CD8-positive, alpha-beta T cell (primary cell): ENCODE measurements at regions of chr1 and their contacts with region 1.

Region 1: DNA sequence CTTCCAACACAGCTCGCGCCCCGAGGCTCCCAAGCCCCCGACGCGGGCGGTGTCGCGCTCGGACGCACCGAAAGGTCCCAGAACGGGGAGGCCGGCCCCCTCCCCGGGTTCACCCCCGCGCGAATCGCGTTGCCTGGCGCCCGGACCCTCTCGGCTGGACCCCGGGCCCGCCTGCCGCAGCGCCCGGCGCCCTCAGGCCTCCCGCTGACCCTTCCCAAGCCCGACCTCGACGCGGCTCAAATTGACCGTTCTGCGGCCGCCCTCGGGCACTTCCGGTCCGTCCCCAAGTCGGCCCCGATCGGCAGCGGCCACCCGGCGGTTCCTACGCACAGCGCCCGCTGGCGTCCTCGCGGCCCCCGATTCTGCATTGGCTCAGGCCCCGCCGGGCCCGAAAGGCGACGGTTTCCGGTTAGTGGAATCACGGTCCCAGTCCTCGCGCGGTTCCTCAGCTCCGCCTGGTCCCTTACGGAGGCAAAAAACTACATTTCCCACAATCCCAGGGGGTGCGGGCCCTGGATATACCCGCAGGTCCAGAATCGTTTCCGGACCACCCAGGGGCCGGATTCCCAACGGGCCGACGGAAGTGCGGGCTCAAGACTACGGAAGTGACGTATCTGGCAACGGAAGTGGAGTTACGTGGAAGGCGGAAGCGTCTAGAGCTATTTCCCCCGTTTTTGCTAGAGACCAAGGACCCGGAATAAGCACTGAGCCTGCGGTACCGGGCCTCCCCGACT is at the start of gene AURKAIP1:
- DNase-seq: peak; percentile 89 to 100 (median 95)
- ATAC-seq: peak; percentile 58
- H3K4me3 ChIP-seq: peak within 1 kb of the TSS; percentile 79 to 91
- H3K4me3 Mint-ChIP-seq: peak within 1 kb of the TSS; percentile 86
- H3K27ac ChIP-seq: peak within 1 kb of the TSS; percentile 83 to 94
- H3K27ac Mint-ChIP-seq: peak within 1 kb of the TSS; percentile 94
- H3K4me1 ChIP-seq: peaks cover 33% of the 10 kb centered on the region
- H3K4me1 Mint-ChIP-seq: peaks cover 33% of the 10 kb centered on the region
- H3K27me3 ChIP-seq: no peaks in the 10 kb centered on the region
- H3K27me3 Mint-ChIP-seq: no peaks in the 10 kb centered on the region
- CTCF ChIP-seq: no peak
- total RNA-seq, gene AURKAIP1: 58.4 to 62.6 TPM

Region 2: GRCh38 chr1:1122078-1122811 is 252.9 kb before region 1 on chr1:
- CTCF ChIA-PET with region 1: interaction called, 30 read pairs
- POLR2A ChIA-PET with region 1: no interaction called
- intact Hi-C with region 1: loop called in 1 of 2 experiments (anchors 1 kb)
- DNase-seq: peak; percentile 68 to 92 (median 82)
- ATAC-seq: peak; percentile 98
- H3K4me3 ChIP-seq: peak overlapping the region; percentile 43 to 46
- H3K4me3 Mint-ChIP-seq: peak overlapping the region; percentile 37
- H3K27ac ChIP-seq: no peak overlapping the region
- H3K27ac Mint-ChIP-seq: no peak overlapping the region
- H3K4me1 ChIP-seq: peaks cover 12% of the 10 kb centered on the region
- H3K4me1 Mint-ChIP-seq: peaks cover 4% of the 10 kb centered on the region
- H3K27me3 ChIP-seq: peaks cover 0 to 3% of the 10 kb centered on the region in 2 experiments
- H3K27me3 Mint-ChIP-seq: peaks cover 4% of the 10 kb centered on the region
- CTCF ChIP-seq: peak; percentile 81

Region 3: DNA sequence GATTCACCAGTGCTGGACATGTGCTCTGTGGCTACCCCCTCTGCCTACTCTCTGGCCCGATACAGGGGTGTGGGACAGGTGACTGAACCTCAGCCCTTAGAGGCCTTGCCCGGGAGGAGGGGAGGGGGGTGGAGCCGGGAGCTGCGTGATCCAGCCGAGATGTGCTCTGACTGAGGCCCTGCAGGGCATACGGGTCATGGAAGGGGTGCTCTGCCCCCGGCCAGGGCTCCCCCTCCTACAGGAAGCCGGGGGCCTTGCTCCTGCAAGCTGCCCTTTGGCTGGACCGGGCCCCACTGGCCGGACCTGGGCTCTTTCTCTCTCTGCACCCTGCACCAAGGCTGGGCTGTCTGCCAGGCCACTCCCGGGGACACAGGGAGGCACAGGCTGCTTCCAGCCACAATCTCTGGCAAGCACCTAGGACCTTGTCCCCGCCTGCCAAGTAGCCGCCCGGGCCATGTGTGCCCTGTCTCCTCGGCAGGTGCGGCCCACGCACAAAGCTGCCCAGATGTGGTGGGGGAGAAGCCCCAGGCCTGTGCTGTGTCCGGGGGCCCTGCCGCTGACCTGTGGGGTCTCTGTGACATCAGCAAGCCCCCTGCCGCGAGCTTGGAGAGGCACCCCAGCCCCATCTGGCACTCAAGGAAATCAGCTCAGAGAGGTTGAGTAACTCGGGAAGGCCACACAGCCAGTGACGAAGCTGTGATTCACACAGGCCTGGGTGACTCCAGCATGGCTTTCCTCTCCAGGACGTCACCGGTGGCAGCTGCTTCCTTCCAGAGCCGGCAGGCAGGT is 93.4 kb before region 1 on chr1:
- CTCF ChIA-PET with region 1: no interaction called
- POLR2A ChIA-PET with region 1: no interaction called
- intact Hi-C with region 1: no loop called
- DNase-seq: peak in 1 of 9 experiments; percentile 7
- ATAC-seq: no peak
- H3K4me3 ChIP-seq: no peak overlapping the region
- H3K4me3 Mint-ChIP-seq: no peak overlapping the region
- H3K27ac ChIP-seq: no peak overlapping the region
- H3K27ac Mint-ChIP-seq: no peak overlapping the region
- H3K4me1 ChIP-seq: no peaks in the 10 kb centered on the region
- H3K4me1 Mint-ChIP-seq: no peaks in the 10 kb centered on the region
- H3K27me3 ChIP-seq: no peaks in the 10 kb centered on the region
- H3K27me3 Mint-ChIP-seq: no peaks in the 10 kb centered on the region
- CTCF ChIP-seq: no peak

Region 4: GRCh38 chr1:1324521-1325287 is 50.4 kb before region 1 on chr1 and contains the starts of genes CPTP and INTS11:
- CTCF ChIA-PET with region 1: interaction called, 4 read pairs
- POLR2A ChIA-PET with region 1: no interaction called
- intact Hi-C with region 1: loop called in 1 of 2 experiments (anchors 1 kb)
- DNase-seq: peak; percentile 89 to 98 (median 96)
- ATAC-seq: peak; percentile 86
- H3K4me3 ChIP-seq: peak within 1 kb of the TSS; percentile 60 to 77
- H3K4me3 Mint-ChIP-seq: peak within 1 kb of the TSS; percentile 89
- H3K27ac ChIP-seq: peak within 1 kb of the TSS; percentile 73
- H3K27ac Mint-ChIP-seq: peak within 1 kb of the TSS; percentile 89
- H3K4me1 ChIP-seq: peaks cover 35% of the 10 kb centered on the region
- H3K4me1 Mint-ChIP-seq: peaks cover 35% of the 10 kb centered on the region
- H3K27me3 ChIP-seq: no peaks in the 10 kb centered on the region
- H3K27me3 Mint-ChIP-seq: no peaks in the 10 kb centered on the region
- CTCF ChIP-seq: no peak
- total RNA-seq, gene CPTP: 7.3 to 7.9 TPM
- total RNA-seq, gene INTS11: 139 to 156 TPM

Region 5: DNA sequence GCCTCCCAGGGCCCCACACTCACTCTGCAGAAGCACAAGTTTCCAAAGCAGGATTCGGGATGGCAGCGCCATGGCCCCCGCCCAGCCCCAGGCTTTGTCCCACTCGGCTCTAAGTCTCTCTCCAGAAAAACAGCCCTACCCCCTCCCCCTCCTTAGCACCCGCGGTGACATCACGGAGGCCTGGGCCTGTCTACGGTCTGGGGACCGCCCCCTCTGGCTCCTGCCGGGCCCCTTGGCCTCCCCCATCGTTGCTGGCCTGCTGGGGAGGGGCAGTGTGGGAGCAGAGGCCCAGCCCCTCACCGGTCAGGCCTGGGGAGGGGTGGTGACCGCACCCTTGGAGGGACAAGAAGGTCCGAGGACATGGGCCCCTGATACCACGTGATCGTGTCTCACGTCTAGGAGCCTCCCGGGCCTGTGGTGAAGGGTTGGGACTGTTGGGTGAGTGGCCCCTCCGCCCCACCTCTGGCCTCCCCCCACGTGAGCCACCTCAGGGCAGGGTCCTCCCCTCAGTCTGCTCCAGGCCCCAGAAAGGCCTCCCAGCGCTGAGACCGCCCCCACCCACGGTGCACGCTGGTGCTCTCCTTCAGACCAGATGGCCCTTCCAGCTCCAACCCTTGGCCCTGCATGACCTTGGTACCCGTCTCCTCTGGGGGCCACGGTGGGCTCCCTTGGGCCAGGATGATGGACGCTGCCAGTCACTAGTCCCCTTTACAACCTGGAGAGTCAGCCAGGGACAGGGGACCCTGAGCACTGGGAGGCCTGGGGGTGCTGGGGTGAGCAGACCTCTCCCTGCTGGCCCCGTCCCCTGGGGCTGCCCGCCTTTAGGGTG is 16.4 kb before region 1 on chr1 and contains the start of gene MXRA8:
- CTCF ChIA-PET with region 1: interaction called, 41 read pairs
- POLR2A ChIA-PET with region 1: interaction called, 13 read pairs
- intact Hi-C with region 1: loop called (anchors 1 kb)
- DNase-seq: peak in 2 of 9 experiments; percentile 28 to 41
- ATAC-seq: peak; percentile 42
- H3K4me3 ChIP-seq: peak within 1 kb of the TSS; percentile 7 to 37
- H3K4me3 Mint-ChIP-seq: peak within 1 kb of the TSS; percentile 62
- H3K27ac ChIP-seq: peak within 1 kb of the TSS; percentile 14 to 30
- H3K27ac Mint-ChIP-seq: peak within 1 kb of the TSS; percentile 70
- H3K4me1 ChIP-seq: peaks cover 35% of the 10 kb centered on the region
- H3K4me1 Mint-ChIP-seq: peaks cover 27% of the 10 kb centered on the region
- H3K27me3 ChIP-seq: peaks cover 0 to 26% of the 10 kb centered on the region in 2 experiments
- H3K27me3 Mint-ChIP-seq: peaks cover 6% of the 10 kb centered on the region
- CTCF ChIP-seq: no peak
- total RNA-seq, gene MXRA8: 7.5 to 9.3 TPM

Region 6: GRCh38 chr1:1406817-1407635 is 31.9 kb after region 1 on chr1 and contains the start of gene MRPL20:
- CTCF ChIA-PET with region 1: interaction called, 4 read pairs
- POLR2A ChIA-PET with region 1: interaction called, 9 read pairs
- intact Hi-C with region 1: loop called (anchors 1 kb)
- DNase-seq: peak; percentile 89 to 98 (median 96)
- ATAC-seq: peak; percentile 95
- H3K4me3 ChIP-seq: peak within 1 kb of the TSS; percentile 79 to 87
- H3K4me3 Mint-ChIP-seq: peak within 1 kb of the TSS; percentile 94
- H3K27ac ChIP-seq: peak within 1 kb of the TSS; percentile 81 to 87
- H3K27ac Mint-ChIP-seq: peak within 1 kb of the TSS; percentile 96
- H3K4me1 ChIP-seq: peaks cover 20% of the 10 kb centered on the region
- H3K4me1 Mint-ChIP-seq: peaks cover 46% of the 10 kb centered on the region
- H3K27me3 ChIP-seq: no peaks in the 10 kb centered on the region
- H3K27me3 Mint-ChIP-seq: no peaks in the 10 kb centered on the region
- CTCF ChIP-seq: no peak
- total RNA-seq, gene MRPL20: 92.6 to 92.7 TPM

Region 7: DNA sequence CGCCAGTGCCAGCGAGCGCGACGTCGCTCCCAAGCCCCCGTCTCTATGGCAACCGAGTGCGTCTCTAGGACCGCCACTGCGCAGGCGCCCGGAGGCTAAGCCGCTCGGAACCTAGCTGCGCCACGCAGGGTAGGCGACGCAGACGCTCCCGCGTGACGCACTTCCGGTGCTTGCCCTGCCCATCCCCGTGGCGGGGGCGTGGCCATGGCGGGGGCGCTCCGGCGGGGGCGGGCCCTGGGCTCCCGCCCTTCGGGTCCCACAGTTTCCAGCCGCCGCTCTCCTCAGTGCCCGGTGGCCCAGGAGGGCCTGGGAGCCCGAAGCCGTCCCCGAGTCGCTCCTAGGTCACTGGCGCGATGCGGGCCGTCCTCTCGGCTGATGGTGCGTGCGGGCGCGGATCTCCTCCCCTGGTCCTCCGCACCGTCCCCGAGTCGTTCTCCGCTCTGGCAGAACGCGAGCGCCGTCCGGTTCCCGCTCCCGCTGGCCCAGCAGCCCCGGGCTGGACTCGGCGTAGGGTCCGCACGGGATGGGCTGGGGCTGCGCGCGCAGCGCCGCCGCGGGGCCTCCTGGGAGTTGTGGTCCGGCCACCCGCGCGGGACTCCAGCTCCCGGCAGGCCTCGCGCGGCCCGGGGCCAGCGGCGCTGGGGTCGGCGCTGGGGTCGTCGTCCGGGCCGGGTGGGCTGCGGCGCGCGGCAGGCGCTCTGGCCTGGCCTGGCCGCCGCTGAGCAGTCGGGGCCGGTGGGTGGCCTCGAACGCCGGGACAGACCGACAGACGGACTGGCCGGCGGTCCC is 240.4 kb after region 1 on chr1 and contains the start of gene MIB2:
- CTCF ChIA-PET with region 1: no interaction called
- POLR2A ChIA-PET with region 1: no interaction called
- intact Hi-C with region 1: loop called in 1 of 2 experiments (anchors 1 kb)
- DNase-seq: peak; percentile 94 to 100 (median 98)
- ATAC-seq: peak; percentile 82
- H3K4me3 ChIP-seq: peak within 1 kb of the TSS; percentile 91 to 100
- H3K4me3 Mint-ChIP-seq: peak within 1 kb of the TSS; percentile 90
- H3K27ac ChIP-seq: peak within 1 kb of the TSS; percentile 100
- H3K27ac Mint-ChIP-seq: peak within 1 kb of the TSS; percentile 100
- H3K4me1 ChIP-seq: peaks cover 26% of the 10 kb centered on the region
- H3K4me1 Mint-ChIP-seq: peaks cover 32% of the 10 kb centered on the region
- H3K27me3 ChIP-seq: no peaks in the 10 kb centered on the region
- H3K27me3 Mint-ChIP-seq: no peaks in the 10 kb centered on the region
- CTCF ChIP-seq: no peak
- total RNA-seq, gene MIB2: 57.0 to 57.3 TPM